Transverse colon (tissue), 4 donors: ENCODE measurements at regions of chr19 and their contacts with region 1.

Region 1: DNA sequence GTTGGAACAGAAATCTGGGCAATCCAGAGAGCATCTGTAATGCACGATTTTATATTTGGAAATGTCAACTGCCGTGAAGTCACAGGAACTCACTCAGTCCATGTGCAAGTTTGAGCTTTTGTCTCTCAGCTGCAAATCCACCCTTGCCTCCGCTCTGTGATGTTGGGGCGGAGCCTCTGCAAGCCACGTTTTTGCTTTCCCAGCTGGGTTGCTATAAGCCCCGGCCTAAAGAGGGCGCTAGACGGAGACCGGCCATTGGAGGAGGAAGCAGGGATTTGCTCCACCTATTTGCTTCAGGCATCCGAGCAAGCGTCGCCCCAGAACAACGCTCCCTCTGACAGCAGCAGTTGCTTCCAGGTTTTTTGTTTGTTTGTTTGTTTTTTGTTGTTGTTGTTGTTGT is 56.2 kb downstream of the TRPM4 start:
- DNase-seq: no peak
- H3K4me3 ChIP-seq: no peak overlapping the region
- H3K27ac ChIP-seq: no peak overlapping the region
- H3K4me1 ChIP-seq: no peaks in the 10 kb centered on the region
- H3K27me3 ChIP-seq: no peaks in the 10 kb centered on the region
- CTCF ChIP-seq: peak in 1 of 5 experiments; percentile 7
- EP300 ChIP-seq: no peak
- POLR2A ChIP-seq: no peak

Region 2: GRCh38 chr19:49243129-49243528 is 29.3 kb after region 1 on chr19:
- in situ Hi-C with region 1: no loop called
- intact Hi-C with region 1: loop called (anchors 1 kb)
- DNase-seq: no peak
- H3K4me3 ChIP-seq: no peak overlapping the region
- H3K27ac ChIP-seq: no peak overlapping the region
- H3K4me1 ChIP-seq: peaks cover 0 to 11% (median 7%) of the 10 kb centered on the region in 4 donors
- H3K27me3 ChIP-seq: no peaks in the 10 kb centered on the region
- CTCF ChIP-seq: no peak
- EP300 ChIP-seq: no peak
- POLR2A ChIP-seq: no peak